MCF 10A (cell line): ENCODE measurements at regions of chr12 and their contacts with region 1.

Region 1: GRCh38 chr12:122123051-122123760 is 44.6 kb downstream of the MLXIP start:
- DNase-seq: peak; percentile 84
- H3K4me3 Mint-ChIP-seq: peak overlapping the region; percentile 1
- H3K27ac Mint-ChIP-seq: no peak overlapping the region
- H3K4me1 Mint-ChIP-seq: peaks cover 19% of the 10 kb centered on the region
- H3K27me3 Mint-ChIP-seq: no peaks in the 10 kb centered on the region
- CTCF ChIP-seq: peak; percentile 82

Region 2: DNA sequence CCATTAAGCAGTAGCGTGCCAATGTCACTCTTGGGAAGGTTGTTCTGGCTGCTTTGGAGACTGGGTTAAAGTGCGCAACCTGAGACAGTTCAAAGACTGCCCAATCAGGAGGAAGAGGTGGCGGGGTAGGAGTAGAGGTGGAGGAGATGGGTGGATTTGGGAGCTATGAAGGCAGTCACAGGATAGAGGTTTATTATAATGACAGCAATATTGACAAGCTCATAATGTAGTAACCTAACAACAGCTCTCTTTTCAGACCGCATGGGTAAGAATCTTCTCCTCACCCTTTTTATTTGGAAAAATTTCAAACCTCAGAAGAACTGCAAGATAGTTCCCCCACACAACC is 239.9 kb before region 1 on chr12:
- CTCF ChIA-PET with region 1: no interaction called
- POLR2A ChIA-PET with region 1: no interaction called
- intact Hi-C with region 1: no loop called
- DNase-seq: no peak
- H3K4me3 Mint-ChIP-seq: no peak overlapping the region
- H3K27ac Mint-ChIP-seq: no peak overlapping the region
- H3K4me1 Mint-ChIP-seq: no peaks in the 10 kb centered on the region
- H3K27me3 Mint-ChIP-seq: no peaks in the 10 kb centered on the region
- CTCF ChIP-seq: no peak

Region 3: GRCh38 chr12:121917979-121918678 is 205.1 kb before region 1 on chr12 and contains the start of gene CFAP251:
- CTCF ChIA-PET with region 1: interaction called, 4 read pairs
- POLR2A ChIA-PET with region 1: no interaction called
- intact Hi-C with region 1: loop called (anchors 5 kb)
- DNase-seq: no peak
- H3K4me3 Mint-ChIP-seq: no peak within 1 kb of the TSS
- H3K27ac Mint-ChIP-seq: no peak within 1 kb of the TSS
- H3K4me1 Mint-ChIP-seq: no peaks in the 10 kb centered on the region
- H3K27me3 Mint-ChIP-seq: no peaks in the 10 kb centered on the region
- CTCF ChIP-seq: no peak
- total RNA-seq, gene CFAP251: 19.7 and 23.5 TPM in 2 replicates

Region 4: GRCh38 chr12:122051231-122051876 is 71.9 kb before region 1 on chr12:
- CTCF ChIA-PET with region 1: interaction called, 68 read pairs
- POLR2A ChIA-PET with region 1: interaction called, 4 read pairs
- intact Hi-C with region 1: loop called (anchors 1 kb)
- DNase-seq: no peak
- H3K4me3 Mint-ChIP-seq: no peak overlapping the region
- H3K27ac Mint-ChIP-seq: no peak overlapping the region
- H3K4me1 Mint-ChIP-seq: no peaks in the 10 kb centered on the region
- H3K27me3 Mint-ChIP-seq: no peaks in the 10 kb centered on the region
- CTCF ChIP-seq: no peak

Region 5: GRCh38 chr12:122064025-122064777 is 59.0 kb before region 1 on chr12:
- CTCF ChIA-PET with region 1: interaction called, 26 read pairs
- POLR2A ChIA-PET with region 1: interaction called, 6 read pairs
- intact Hi-C with region 1: no loop called
- DNase-seq: peak; percentile 86
- H3K4me3 Mint-ChIP-seq: no peak overlapping the region
- H3K27ac Mint-ChIP-seq: no peak overlapping the region
- H3K4me1 Mint-ChIP-seq: peaks cover 13% of the 10 kb centered on the region
- H3K27me3 Mint-ChIP-seq: no peaks in the 10 kb centered on the region
- CTCF ChIP-seq: no peak

Region 6: DNA sequence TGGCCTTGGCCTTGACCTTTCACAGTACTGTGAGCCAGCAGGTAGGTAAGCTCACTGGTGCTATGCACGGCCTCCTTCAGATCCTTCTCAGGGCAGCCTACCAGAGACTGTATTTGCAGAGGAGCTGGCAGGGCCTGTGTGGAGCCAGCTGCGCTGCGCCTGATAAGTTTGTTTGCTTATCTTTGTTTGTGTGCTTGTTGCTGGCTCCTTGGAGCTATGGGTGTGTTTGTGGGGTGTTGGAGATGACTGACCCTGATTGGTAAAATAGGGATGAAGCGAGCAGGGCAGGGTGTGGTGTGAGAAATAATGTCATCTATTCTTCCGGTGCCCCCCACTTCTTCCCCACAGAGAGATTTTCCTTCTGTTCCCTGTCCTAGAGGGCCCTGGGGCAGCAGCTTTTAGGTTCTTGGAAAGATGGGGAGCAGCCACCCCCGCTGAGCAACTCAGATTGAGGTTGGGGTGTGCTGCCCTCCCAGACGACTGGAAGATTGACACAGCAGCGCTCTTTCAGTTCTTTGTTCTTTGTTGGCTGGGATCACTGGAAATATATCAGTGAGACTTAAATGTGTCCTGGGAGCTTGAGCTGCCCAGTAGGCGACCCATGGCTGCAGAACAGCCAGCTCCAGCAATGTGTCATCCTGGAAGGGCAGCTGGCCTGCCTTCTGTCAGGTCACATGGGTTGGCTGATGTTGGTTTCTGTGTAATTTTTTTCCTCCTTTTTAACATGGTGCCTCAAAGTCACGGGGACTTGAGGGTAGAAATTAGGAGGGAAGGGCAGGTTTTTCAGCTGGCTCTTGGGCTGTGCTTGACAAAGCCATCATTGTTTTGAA is 25.1 kb before region 1 on chr12:
- CTCF ChIA-PET with region 1: interaction called, 40 read pairs
- POLR2A ChIA-PET with region 1: interaction called, 3 read pairs
- intact Hi-C with region 1: no loop called
- DNase-seq: no peak
- H3K4me3 Mint-ChIP-seq: peak overlapping the region; percentile 51
- H3K27ac Mint-ChIP-seq: peak overlapping the region; percentile 97
- H3K4me1 Mint-ChIP-seq: peaks cover 39% of the 10 kb centered on the region
- H3K27me3 Mint-ChIP-seq: no peaks in the 10 kb centered on the region
- CTCF ChIP-seq: no peak

Region 7: DNA sequence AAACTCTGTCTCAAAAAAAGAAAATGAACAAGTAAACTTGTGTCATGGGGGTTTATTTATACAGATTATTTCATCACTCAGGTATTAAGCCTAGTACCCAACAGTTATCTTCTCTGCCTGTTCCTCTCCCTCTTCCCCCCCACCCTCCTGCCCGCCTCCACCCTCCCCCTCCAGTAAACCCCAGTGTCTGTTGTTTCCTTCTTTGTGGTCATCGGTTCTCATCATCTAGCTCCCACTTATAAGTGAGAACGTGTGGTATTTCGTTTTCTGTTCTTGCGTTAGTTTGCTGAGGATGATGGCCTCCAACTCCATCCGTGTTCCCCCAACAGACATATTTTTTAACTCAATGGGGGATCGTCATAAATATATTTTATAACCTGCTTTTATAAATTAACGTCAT is 38.5 kb after region 1 on chr12:
- CTCF ChIA-PET with region 1: no interaction called
- POLR2A ChIA-PET with region 1: no interaction called
- intact Hi-C with region 1: no loop called
- DNase-seq: no peak
- H3K4me3 Mint-ChIP-seq: no peak overlapping the region
- H3K27ac Mint-ChIP-seq: no peak overlapping the region
- H3K4me1 Mint-ChIP-seq: peaks cover 6% of the 10 kb centered on the region
- H3K27me3 Mint-ChIP-seq: no peaks in the 10 kb centered on the region
- CTCF ChIP-seq: no peak